Sciatic nerve (tissue), 2 donors: ENCODE measurements at regions of chr3 and their contacts with region 1.

Region 1: DNA sequence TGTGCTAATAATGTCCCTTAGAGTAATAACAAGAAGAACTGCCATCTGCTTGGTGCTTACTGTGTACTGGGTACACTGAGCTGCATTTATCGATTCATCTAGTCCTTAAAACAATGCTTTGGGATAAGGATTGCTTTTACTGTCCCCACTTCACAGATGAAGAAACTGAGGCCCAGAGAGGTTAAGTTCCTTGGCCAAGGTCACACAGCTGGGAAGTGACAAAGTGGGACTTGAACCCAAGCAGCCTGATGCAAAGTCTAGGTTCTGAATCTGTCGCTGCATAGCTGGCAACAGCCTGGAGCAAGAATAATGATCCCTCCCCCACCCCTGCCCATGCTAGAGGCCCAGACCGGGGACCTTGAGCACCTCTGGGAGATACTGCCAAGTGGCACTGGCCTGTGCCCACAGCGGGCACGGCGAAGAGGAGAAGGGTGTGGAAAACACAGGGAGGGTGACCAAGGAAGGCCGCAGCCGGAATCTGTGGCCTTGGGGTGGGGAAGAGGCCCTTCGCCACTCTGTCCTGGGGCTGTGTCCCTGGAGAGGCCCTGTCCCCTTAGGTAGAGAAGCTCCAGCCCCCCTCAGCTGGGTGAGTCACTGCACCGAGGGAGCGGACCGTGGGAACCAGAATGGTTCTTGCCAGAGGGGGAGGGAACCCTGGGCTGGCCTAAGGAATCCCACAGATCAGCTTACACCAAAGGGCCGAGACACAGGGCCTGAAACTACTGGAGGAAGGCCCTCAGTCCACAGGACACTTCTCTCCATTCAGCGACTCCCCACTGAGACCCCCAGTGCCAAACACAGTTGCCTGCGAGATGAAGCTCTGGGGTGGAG is 3.5 kb downstream of the PLXND1 start:
- DNase-seq: peak; percentile 89
- ATAC-seq: peak; percentile 72

Region 2: DNA sequence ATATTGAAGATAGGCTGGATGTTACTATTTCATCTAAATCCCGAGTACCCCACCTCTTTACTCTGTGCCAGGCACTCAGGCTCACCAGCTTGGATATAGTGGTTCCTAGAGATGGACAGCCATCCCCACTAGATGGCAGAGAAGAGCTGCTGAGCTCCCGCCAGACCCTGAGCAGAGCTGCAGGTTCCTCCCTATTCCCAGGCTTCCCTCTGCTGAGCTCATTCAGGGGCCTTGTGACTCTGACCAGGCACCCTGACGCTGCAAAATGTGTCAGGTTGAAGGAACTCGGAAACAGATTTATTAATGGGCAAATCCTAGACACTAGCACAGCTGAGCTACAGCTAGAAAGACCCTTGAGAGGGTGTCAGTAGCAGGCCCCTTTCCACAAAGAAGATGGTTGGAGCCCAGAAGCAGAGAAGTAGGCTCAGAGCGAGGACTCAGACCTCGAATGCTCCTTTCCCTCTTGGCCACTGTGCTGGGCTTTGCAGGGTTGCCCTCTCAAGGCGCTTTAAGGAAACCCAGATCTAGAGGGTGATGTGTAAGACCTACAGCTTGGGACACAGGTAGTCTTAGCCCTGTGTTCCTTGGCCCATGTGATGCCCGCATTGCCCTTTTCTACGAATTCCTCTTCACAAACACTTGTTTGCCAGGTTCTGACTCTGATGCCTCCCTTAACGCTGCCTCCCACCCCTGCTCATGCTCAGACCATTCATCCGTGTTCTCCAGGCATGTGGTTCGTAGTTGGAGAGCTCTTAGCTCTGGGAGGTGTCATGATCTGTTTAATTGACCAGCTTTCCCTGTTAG is 112.5 kb before region 1 on chr3:
- intact Hi-C with region 1: loop called (anchors 5 kb)
- DNase-seq: peak; percentile 89
- ATAC-seq: peak; percentile 91

Region 3: GRCh38 chr3:129616713-129617112 is 13.8 kb after region 1 on chr3:
- intact Hi-C with region 1: no loop called
- DNase-seq: peak; percentile 61
- ATAC-seq: peak; percentile 6